HCT116 (cell line): ENCODE measurements at regions of chr17 and their contacts with region 1.

Region 1: GRCh38 chr17:79970576-79971068 is 65.0 kb downstream of the TBC1D16 start:
- DNase-seq: peak; percentile 38
- ATAC-seq: peak; percentile 75
- H3K4me3 ChIP-seq: no peak overlapping the region
- H3K27ac ChIP-seq: no peak overlapping the region
- H3K4me1 ChIP-seq: no peaks in the 10 kb centered on the region
- H3K27me3 ChIP-seq: no peaks in the 10 kb centered on the region
- CTCF ChIP-seq: peak; percentile 82 to 98 (median 86)
- POLR2A ChIP-seq: no peak
- RAD21 ChIP-seq: peak; percentile 79

Region 2: GRCh38 chr17:79789534-79790353 is 180.9 kb before region 1 on chr17:
- CTCF ChIA-PET with region 1: interaction called, 5 read pairs
- POLR2A ChIA-PET with region 1: no interaction called
- RAD21 ChIA-PET with region 1: no interaction called
- intact Hi-C with region 1: loop called (anchors 5 kb)
- DNase-seq: no peak
- ATAC-seq: peak; percentile 80
- H3K4me3 ChIP-seq: no peak overlapping the region
- H3K27ac ChIP-seq: no peak overlapping the region; the same call in 1 of the 2 replicates
- H3K4me1 ChIP-seq: peaks cover 19 to 31% of the 10 kb centered on the region in 2 experiments
- H3K27me3 ChIP-seq: no peaks in the 10 kb centered on the region
- CTCF ChIP-seq: peak; percentile 89 to 95 (median 92)
- POLR2A ChIP-seq: no peak
- RAD21 ChIP-seq: peak; percentile 97; the same call in 1 of the 2 replicates